Mammary epithelial cell (primary cell): ENCODE measurements at regions of chr17 and their contacts with region 1.

Region 1: GRCh38 chr17:35170968-35171771 is 23.0 kb downstream of the SLC35G3 start:
- DNase-seq: peak; percentile 17
- H3K4me3 ChIP-seq: no peak overlapping the region
- H3K27ac ChIP-seq: no peak overlapping the region
- H3K4me1 ChIP-seq: peaks cover 7% of the 10 kb centered on the region
- H3K27me3 ChIP-seq: no peaks in the 10 kb centered on the region
- CTCF ChIP-seq: peak; percentile 20 to 36

Region 2: DNA sequence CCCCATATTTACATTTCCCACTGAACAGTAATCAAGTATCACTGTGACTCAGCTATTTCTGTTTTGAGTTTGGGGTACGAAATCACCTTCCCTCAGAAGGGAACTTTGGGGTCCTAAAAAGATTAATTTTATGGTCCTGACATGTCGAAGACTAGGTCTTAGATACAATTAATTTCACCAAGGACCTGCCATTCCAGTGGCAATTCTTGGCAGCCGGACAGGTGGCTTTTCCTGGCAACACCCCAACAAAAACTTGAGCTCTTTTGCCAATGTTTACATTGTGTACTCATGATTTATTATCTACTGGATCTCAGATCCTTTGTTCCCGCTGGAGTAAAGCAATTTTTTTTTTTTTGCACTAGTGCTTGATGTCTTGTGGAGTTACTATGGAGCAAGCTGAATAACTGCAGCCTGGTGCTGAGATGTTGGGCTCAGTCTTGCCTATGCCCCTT is 86.1 kb after region 1 on chr17:
- CTCF ChIA-PET with region 1: no interaction called
- dilution Hi-C with region 1: no loop called
- in situ Hi-C with region 1: no loop called
- intact Hi-C with region 1: loop called (anchors 5 kb)
- DNase-seq: peak; percentile 88
- H3K4me3 ChIP-seq: no peak overlapping the region
- H3K27ac ChIP-seq: peak overlapping the region; percentile 37
- H3K4me1 ChIP-seq: peaks cover 24% of the 10 kb centered on the region
- H3K27me3 ChIP-seq: no peaks in the 10 kb centered on the region
- CTCF ChIP-seq: no peak

Region 3: DNA sequence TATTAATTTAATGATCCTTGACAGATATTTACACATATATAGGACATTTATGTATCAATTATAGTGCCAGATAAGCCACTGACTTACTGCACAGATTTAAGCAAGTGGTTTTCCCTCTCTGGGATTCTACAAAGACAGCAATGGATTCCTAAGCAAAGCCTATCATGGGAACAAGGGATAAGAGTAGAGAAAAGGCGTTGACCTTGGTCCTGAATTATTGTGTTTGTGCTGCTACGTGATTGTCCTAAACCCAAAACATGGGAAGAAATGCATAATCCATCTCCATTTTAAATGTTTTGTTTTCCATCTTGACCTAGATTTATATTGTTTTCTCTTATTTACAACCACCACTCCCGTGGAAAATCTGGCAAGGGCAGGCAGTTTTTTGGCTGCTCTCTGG is 188.2 kb after region 1 on chr17:
- CTCF ChIA-PET with region 1: no interaction called
- dilution Hi-C with region 1: no loop called
- in situ Hi-C with region 1: no loop called
- intact Hi-C with region 1: no loop called
- DNase-seq: no peak
- H3K4me3 ChIP-seq: no peak overlapping the region
- H3K27ac ChIP-seq: no peak overlapping the region
- H3K4me1 ChIP-seq: no peaks in the 10 kb centered on the region
- H3K27me3 ChIP-seq: peaks cover 4% of the 10 kb centered on the region
- CTCF ChIP-seq: no peak

Region 4: GRCh38 chr17:35376245-35376644 is 205.1 kb after region 1 on chr17:
- CTCF ChIA-PET with region 1: no interaction called
- dilution Hi-C with region 1: no loop called
- in situ Hi-C with region 1: no loop called
- intact Hi-C with region 1: no loop called
- DNase-seq: no peak
- H3K4me3 ChIP-seq: no peak overlapping the region
- H3K27ac ChIP-seq: no peak overlapping the region
- H3K4me1 ChIP-seq: peaks cover 15% of the 10 kb centered on the region
- H3K27me3 ChIP-seq: peaks cover 25% of the 10 kb centered on the region
- CTCF ChIP-seq: no peak

Region 5: GRCh38 chr17:35432176-35433074 is 261.3 kb after region 1 on chr17 and contains the start of gene SLFN12:
- CTCF ChIA-PET with region 1: no interaction called
- dilution Hi-C with region 1: no loop called
- in situ Hi-C with region 1: no loop called
- intact Hi-C with region 1: loop called (anchors 10 kb)
- DNase-seq: peak; percentile 50
- H3K4me3 ChIP-seq: peak within 1 kb of the TSS; percentile 48 to 81 (median 55)
- H3K27ac ChIP-seq: peak within 1 kb of the TSS; percentile 52
- H3K4me1 ChIP-seq: peaks cover 18% of the 10 kb centered on the region
- H3K27me3 ChIP-seq: no peaks in the 10 kb centered on the region
- CTCF ChIP-seq: no peak
- total RNA-seq, gene SLFN12: 10.8 to 22.2 TPM

Region 6: DNA sequence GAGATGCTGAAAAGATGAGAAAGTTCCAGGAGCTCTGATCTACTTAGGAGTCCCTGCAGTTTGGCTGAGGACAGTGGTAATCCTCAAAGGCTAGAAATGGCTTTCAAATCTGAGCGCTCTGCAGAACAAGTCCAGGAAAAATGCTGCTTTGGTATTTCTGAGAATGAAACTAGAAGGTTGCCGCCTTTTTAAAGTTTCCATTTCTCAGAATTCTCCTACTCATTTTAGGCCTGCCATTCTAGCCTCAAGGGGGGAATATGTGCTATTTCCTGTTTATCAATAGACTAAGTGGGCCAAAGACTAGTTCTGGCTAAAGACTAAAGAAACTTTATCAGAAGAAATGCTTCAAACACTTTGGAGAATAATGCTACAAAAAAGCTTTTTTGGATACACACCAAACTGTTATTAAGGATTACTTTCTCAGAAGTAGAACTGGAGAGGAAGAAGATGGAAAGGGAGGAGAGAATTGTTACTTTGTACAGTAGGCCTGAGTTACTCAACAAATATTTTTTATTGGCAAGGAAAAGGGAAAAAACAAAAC is 366.5 kb after region 1 on chr17 and contains the start of gene SLFN12L:
- CTCF ChIA-PET with region 1: no interaction called
- dilution Hi-C with region 1: no loop called
- in situ Hi-C with region 1: loop called (anchors 5 kb)
- intact Hi-C with region 1: loop called (anchors 1 kb)
- DNase-seq: no peak
- H3K4me3 ChIP-seq: no peak within 1 kb of the TSS
- H3K27ac ChIP-seq: no peak within 1 kb of the TSS
- H3K4me1 ChIP-seq: no peaks in the 10 kb centered on the region
- H3K27me3 ChIP-seq: peaks cover 2% of the 10 kb centered on the region
- CTCF ChIP-seq: no peak
- total RNA-seq, gene SLFN12L: 0.12 to 0.17 TPM